CD4-positive, alpha-beta memory T cell (primary cell): ENCODE measurements at regions of chr4 and their contacts with region 1.

Region 1: GRCh38 chr4:173301518-173302201 is 32.5 kb downstream of the HMGB2 start:
- DNase-seq: peak in 4 of 5 donors; percentile 25 to 32 (median 28)
- H3K4me3 ChIP-seq: no peak overlapping the region
- H3K4me3 Mint-ChIP-seq: no peak overlapping the region
- H3K27ac ChIP-seq: no peak overlapping the region
- H3K27ac Mint-ChIP-seq: no peak overlapping the region
- H3K4me1 ChIP-seq: no peaks in the 10 kb centered on the region
- H3K4me1 Mint-ChIP-seq: peaks cover 0 to 6% (median 2%) of the 10 kb centered on the region in 4 donors
- H3K27me3 ChIP-seq: no peaks in the 10 kb centered on the region
- H3K27me3 Mint-ChIP-seq: no peaks in the 10 kb centered on the region

Region 2: GRCh38 chr4:173025131-173025530 is 276.5 kb before region 1 on chr4:
- CTCF ChIA-PET with region 1: interaction called, 21 read pairs
- POLR2A ChIA-PET with region 1: no interaction called
- intact Hi-C with region 1: loop called (anchors 1 kb)
- DNase-seq: peak in 4 of 5 donors; percentile 32 to 42 (median 37)
- H3K4me3 ChIP-seq: no peak overlapping the region
- H3K4me3 Mint-ChIP-seq: no peak overlapping the region
- H3K27ac ChIP-seq: no peak overlapping the region
- H3K27ac Mint-ChIP-seq: no peak overlapping the region
- H3K4me1 ChIP-seq: no peaks in the 10 kb centered on the region
- H3K4me1 Mint-ChIP-seq: peaks cover 0 to 2% (median 0%) of the 10 kb centered on the region in 4 donors
- H3K27me3 ChIP-seq: peaks cover 4% of the 10 kb centered on the region
- H3K27me3 Mint-ChIP-seq: peaks cover 2 to 3% of the 10 kb centered on the region in 2 donors

Region 3: DNA sequence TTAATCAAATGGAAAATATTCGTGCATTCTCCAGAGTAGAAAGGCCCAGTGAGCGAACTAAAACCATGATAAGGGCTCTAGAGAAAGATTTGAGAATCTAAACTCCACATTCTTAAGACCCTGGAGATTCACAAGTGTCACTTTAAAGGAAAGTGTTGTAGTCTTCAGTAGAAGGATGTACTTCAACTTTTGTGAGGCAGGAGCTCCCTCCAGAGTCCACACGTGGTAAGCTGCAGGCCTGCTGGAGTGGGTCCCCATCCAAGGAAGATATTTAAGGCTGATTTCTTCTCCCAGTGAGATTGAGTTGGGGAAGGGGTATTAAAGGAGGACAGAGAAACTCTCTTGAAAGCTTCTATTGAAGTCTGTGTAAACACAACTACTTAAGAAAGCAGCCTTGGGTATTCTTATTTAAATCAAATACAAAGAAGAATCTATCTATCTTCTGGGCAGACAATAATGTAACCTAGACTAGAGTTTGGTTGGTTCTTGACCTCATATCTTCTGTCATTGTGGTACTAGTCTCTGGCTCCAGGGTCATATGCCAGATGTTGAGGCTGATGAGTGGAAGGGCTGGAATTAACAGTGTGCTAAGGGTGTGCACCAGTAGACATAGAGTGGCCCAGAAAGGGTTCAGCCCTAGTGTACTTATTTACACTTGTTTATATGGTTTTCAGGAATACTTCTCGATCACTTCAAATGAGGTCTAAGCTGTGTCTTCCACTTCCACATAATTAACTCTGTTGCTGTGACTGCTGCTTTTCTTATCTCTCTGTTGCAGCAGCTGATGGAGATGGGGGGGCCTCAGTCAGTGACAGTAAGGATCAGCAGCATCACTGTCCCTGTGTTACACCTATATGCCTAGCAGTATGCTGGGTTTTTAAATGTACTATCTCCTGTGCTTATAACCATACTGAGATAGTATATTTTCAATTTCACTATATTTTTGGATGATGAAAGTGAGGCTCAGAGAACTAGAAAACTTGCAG is 43.6 kb before region 1 on chr4:
- CTCF ChIA-PET with region 1: interaction called, 15 read pairs
- POLR2A ChIA-PET with region 1: no interaction called
- intact Hi-C with region 1: no loop called
- DNase-seq: peak; percentile 46 to 55 (median 51)
- H3K4me3 ChIP-seq: no peak overlapping the region
- H3K4me3 Mint-ChIP-seq: no peak overlapping the region
- H3K27ac ChIP-seq: no peak overlapping the region
- H3K27ac Mint-ChIP-seq: no peak overlapping the region
- H3K4me1 ChIP-seq: no peaks in the 10 kb centered on the region
- H3K4me1 Mint-ChIP-seq: peaks cover 4 to 9% (median 6%) of the 10 kb centered on the region in 4 donors
- H3K27me3 ChIP-seq: no peaks in the 10 kb centered on the region
- H3K27me3 Mint-ChIP-seq: no peaks in the 10 kb centered on the region

Region 4: GRCh38 chr4:173264684-173265185 is 36.9 kb before region 1 on chr4:
- CTCF ChIA-PET with region 1: interaction called, 14 read pairs
- POLR2A ChIA-PET with region 1: no interaction called
- intact Hi-C with region 1: no loop called
- DNase-seq: peak; percentile 40 to 48 (median 42)
- H3K4me3 ChIP-seq: no peak overlapping the region
- H3K4me3 Mint-ChIP-seq: peak overlapping the region in 7 of 8 donors; percentile 12 to 72 (median 38)
- H3K27ac ChIP-seq: no peak overlapping the region
- H3K27ac Mint-ChIP-seq: peak overlapping the region; percentile 1 to 80 (median 35)
- H3K4me1 ChIP-seq: peaks cover 27% of the 10 kb centered on the region
- H3K4me1 Mint-ChIP-seq: peaks cover 17 to 28% (median 19%) of the 10 kb centered on the region in 4 donors
- H3K27me3 ChIP-seq: no peaks in the 10 kb centered on the region
- H3K27me3 Mint-ChIP-seq: no peaks in the 10 kb centered on the region

Region 5: GRCh38 chr4:173270312-173271027 is 31.2 kb before region 1 on chr4:
- CTCF ChIA-PET with region 1: interaction called, 18 read pairs
- POLR2A ChIA-PET with region 1: no interaction called
- intact Hi-C with region 1: no loop called
- DNase-seq: no peak
- H3K4me3 ChIP-seq: no peak overlapping the region
- H3K4me3 Mint-ChIP-seq: no peak overlapping the region
- H3K27ac ChIP-seq: no peak overlapping the region
- H3K27ac Mint-ChIP-seq: no peak overlapping the region
- H3K4me1 ChIP-seq: peaks cover 5% of the 10 kb centered on the region
- H3K4me1 Mint-ChIP-seq: peaks cover 0 to 10% (median 4%) of the 10 kb centered on the region in 4 donors
- H3K27me3 ChIP-seq: no peaks in the 10 kb centered on the region
- H3K27me3 Mint-ChIP-seq: no peaks in the 10 kb centered on the region

Region 6: GRCh38 chr4:173288296-173288695 is 13.4 kb before region 1 on chr4:
- CTCF ChIA-PET with region 1: interaction called, 38 read pairs
- POLR2A ChIA-PET with region 1: no interaction called
- intact Hi-C with region 1: no loop called
- DNase-seq: peak; percentile 45 to 68 (median 52)
- H3K4me3 ChIP-seq: no peak overlapping the region
- H3K4me3 Mint-ChIP-seq: peak overlapping the region in 6 of 8 donors; percentile 21 to 59 (median 43)
- H3K27ac ChIP-seq: no peak overlapping the region
- H3K27ac Mint-ChIP-seq: peak overlapping the region in 6 of 7 donors; percentile 16 to 78 (median 32)
- H3K4me1 ChIP-seq: peaks cover 11% of the 10 kb centered on the region
- H3K4me1 Mint-ChIP-seq: peaks cover 8 to 17% (median 13%) of the 10 kb centered on the region in 4 donors
- H3K27me3 ChIP-seq: no peaks in the 10 kb centered on the region
- H3K27me3 Mint-ChIP-seq: no peaks in the 10 kb centered on the region

Region 7: DNA sequence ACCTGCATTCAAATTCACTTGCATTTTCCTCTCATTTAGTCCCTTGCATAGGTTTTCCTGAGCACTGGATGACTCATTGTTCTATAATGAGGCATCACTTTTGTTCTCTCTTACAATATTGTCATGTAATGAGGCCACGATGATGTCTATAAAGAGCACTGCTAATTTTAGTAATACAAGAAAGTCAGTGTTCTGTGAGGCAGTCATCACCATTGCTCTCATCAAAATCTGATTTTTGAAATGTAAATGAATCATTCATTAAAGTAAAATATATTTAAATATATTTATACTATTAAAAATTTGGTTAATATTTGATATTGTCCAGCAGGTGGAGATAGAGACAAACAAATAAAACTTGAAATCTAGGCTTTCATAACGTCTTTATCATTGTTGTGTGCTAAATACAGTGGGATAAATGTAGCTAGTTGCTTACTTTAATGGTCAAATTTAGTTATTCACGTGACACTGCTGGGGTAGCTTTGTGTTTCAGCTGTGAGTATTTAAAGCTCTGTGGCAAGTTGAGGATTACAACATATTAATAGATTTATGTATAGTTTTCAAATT is 17.1 kb after region 1 on chr4:
- CTCF ChIA-PET with region 1: interaction called, 16 read pairs
- POLR2A ChIA-PET with region 1: no interaction called
- intact Hi-C with region 1: no loop called
- DNase-seq: peak in 4 of 5 donors; percentile 28 to 37 (median 31)
- H3K4me3 ChIP-seq: no peak overlapping the region
- H3K4me3 Mint-ChIP-seq: no peak overlapping the region
- H3K27ac ChIP-seq: no peak overlapping the region
- H3K27ac Mint-ChIP-seq: no peak overlapping the region
- H3K4me1 ChIP-seq: no peaks in the 10 kb centered on the region
- H3K4me1 Mint-ChIP-seq: peaks cover 0 to 2% (median under 1%) of the 10 kb centered on the region in 4 donors
- H3K27me3 ChIP-seq: no peaks in the 10 kb centered on the region
- H3K27me3 Mint-ChIP-seq: no peaks in the 10 kb centered on the region

Region 8: DNA sequence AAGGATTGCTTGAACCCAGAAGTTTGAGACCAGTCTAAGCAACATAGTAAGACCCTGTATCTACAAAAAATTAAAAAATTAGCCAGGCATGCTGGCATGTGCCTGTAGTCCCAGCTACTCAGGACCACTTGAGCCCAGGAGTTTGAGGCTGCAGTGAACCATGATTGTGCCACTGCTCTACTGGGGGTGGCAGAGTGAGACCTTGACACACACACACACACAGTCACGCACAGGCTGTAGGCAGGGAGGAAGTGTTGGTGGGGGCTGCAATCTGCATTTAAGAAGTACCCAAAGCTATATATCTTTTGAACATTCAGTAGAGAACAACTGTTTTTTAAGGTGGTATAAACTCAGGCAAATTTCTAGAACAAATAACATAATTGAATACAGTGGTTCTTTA is 90.0 kb after region 1 on chr4:
- CTCF ChIA-PET with region 1: no interaction called
- POLR2A ChIA-PET with region 1: no interaction called
- intact Hi-C with region 1: no loop called
- DNase-seq: no peak
- H3K4me3 ChIP-seq: no peak overlapping the region
- H3K4me3 Mint-ChIP-seq: no peak overlapping the region
- H3K27ac ChIP-seq: no peak overlapping the region
- H3K27ac Mint-ChIP-seq: no peak overlapping the region
- H3K4me1 ChIP-seq: no peaks in the 10 kb centered on the region
- H3K4me1 Mint-ChIP-seq: no peaks in the 10 kb centered on the region
- H3K27me3 ChIP-seq: no peaks in the 10 kb centered on the region
- H3K27me3 Mint-ChIP-seq: peaks cover 0 to 2% of the 10 kb centered on the region in 2 donors

Region 9: DNA sequence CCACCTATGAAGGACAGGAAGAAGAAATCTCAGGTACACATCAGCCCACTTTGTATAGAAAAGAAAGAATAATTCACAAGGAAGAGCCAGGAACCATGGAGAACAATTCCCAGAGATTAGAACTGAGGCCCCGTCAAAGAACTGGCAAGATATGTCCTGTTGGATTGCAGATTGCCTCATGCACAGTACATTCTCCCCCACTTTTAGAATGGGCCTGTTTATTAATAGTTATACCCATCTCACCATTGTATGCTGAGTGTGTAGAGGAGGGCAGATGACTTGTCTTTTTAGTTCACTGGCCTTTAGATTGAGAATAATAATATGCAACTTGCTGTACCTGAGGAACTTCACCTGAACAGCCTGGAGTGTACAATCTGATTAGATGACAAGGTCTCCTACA is 543.9 kb after region 1 on chr4:
- CTCF ChIA-PET with region 1: no interaction called
- POLR2A ChIA-PET with region 1: no interaction called
- intact Hi-C with region 1: no loop called
- DNase-seq: no peak
- H3K4me3 ChIP-seq: no peak overlapping the region
- H3K4me3 Mint-ChIP-seq: no peak overlapping the region
- H3K27ac ChIP-seq: no peak overlapping the region
- H3K27ac Mint-ChIP-seq: no peak overlapping the region
- H3K4me1 ChIP-seq: no peaks in the 10 kb centered on the region
- H3K4me1 Mint-ChIP-seq: no peaks in the 10 kb centered on the region
- H3K27me3 ChIP-seq: no peaks in the 10 kb centered on the region
- H3K27me3 Mint-ChIP-seq: no peaks in the 10 kb centered on the region